ENCODE measurements at regions of chr17 and their contacts with region 1.

Region 1: GRCh38 chr17:12568358-12569251 is 97.1 kb upstream of the MYOCD start:
- DNase-seq: no peak
- H3K4me3 ChIP-seq: no peak overlapping the region
- H3K27ac ChIP-seq: no peak overlapping the region
- H3K4me1 ChIP-seq: no peaks in the 10 kb centered on the region
- CTCF ChIP-seq: no peak

Region 2: DNA sequence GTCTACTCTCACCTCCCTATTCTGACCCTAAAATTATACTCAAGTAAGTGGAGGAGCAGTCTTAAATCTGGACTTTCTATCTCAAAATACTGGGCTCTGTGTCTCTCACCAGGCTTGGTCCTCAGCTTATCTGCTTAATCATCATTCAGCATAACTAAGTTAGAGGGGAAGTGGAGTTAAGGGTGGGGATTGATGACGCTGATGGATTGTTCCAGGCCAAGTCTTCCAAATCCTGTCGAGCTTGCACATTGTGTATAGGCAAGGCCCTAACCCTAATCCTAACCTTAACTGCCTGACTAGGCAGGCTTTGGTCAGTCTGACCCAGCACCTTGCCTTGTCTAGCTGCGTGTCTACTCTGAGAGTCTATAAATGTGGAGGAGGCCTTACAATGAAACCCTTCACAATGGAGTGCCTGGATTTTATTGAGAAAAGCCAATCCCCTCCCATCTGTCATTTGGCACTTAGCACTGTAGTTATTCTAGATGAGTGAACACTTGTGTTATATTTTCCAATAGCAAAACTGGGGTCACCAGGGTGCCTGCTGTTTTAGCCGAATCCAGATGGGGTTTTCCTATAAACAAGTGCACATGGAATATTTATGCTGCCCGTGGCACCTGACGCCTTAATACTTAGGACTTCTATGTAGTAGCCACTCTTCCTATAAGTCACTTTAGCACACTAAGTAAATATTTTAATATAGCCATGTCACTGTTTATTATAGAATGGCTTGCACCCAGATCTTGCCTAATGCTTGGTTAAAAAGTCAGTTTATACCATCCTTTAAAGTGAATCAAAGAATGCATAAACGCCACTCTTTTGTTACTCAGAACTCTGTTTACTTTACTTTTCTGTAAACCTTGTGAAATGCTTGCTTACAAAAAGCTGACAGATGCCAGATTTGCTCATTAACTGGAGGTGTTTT is 96.1 kb before region 1 on chr17:
- CTCF ChIA-PET with region 1: no interaction called
- POLR2A ChIA-PET with region 1: no interaction called
- intact Hi-C with region 1: no loop called
- DNase-seq: no peak
- H3K4me3 ChIP-seq: no peak overlapping the region
- H3K27ac ChIP-seq: no peak overlapping the region
- H3K4me1 ChIP-seq: no peaks in the 10 kb centered on the region
- CTCF ChIP-seq: no peak

Region 3: GRCh38 chr17:12627177-12627629 is 58.6 kb after region 1 on chr17:
- CTCF ChIA-PET with region 1: no interaction called
- POLR2A ChIA-PET with region 1: no interaction called
- intact Hi-C with region 1: loop called (anchors 10 kb)
- DNase-seq: no peak
- H3K4me3 ChIP-seq: no peak overlapping the region
- H3K27ac ChIP-seq: no peak overlapping the region
- H3K4me1 ChIP-seq: no peaks in the 10 kb centered on the region
- CTCF ChIP-seq: no peak